ENCODE measurements at regions of chr16 and their contacts with region 1.

Region 1: DNA sequence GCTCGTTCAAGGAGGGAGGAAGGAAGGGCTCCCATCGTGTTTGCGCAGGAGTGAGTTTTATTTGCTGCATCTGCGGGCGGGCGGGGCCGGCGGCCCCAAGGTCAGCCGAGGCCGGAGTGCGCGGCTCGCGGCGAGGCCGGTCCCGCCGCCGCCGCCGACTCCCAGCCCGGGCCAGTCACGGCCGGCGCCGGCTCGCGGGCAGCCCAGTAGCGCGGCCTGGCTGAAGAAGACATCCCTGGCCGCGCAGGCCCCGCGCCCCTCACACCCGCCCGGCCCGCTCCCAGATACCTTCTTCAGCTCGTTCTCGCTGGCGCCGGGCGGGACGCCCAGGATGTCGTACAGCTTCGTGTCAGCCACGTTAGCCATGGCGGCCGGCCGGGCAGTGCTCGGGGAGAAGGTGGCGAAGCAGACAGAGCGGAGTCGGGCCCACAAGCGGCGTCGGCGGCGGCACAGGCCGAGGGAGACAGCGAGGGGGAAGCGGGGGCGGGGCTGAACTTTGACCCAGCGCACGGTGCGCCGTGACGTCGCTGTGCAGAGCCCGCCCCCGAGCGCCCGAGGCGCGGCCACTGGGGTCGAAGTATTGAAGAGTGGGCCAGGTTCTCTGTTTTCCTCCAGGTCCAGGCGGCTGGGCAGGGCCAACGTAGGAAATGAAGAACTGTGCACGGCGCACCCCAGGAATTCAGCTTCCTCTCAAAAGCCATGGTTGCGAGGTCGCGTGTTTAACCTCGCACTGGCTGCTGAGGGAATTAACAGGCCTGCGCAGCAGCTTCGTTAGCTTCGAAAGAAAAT is at the start of gene DNAJA2:
- DNase-seq: peak; percentile 92
- H3K4me3 Mint-ChIP-seq: peak within 1 kb of the TSS; percentile 93
- H3K27ac Mint-ChIP-seq: peak within 1 kb of the TSS; percentile 98
- H3K4me1 Mint-ChIP-seq: peaks cover 62% of the 10 kb centered on the region
- H3K27me3 Mint-ChIP-seq: no peaks in the 10 kb centered on the region
- total RNA-seq, gene DNAJA2: 56.9 to 59.9 TPM

Region 2: DNA sequence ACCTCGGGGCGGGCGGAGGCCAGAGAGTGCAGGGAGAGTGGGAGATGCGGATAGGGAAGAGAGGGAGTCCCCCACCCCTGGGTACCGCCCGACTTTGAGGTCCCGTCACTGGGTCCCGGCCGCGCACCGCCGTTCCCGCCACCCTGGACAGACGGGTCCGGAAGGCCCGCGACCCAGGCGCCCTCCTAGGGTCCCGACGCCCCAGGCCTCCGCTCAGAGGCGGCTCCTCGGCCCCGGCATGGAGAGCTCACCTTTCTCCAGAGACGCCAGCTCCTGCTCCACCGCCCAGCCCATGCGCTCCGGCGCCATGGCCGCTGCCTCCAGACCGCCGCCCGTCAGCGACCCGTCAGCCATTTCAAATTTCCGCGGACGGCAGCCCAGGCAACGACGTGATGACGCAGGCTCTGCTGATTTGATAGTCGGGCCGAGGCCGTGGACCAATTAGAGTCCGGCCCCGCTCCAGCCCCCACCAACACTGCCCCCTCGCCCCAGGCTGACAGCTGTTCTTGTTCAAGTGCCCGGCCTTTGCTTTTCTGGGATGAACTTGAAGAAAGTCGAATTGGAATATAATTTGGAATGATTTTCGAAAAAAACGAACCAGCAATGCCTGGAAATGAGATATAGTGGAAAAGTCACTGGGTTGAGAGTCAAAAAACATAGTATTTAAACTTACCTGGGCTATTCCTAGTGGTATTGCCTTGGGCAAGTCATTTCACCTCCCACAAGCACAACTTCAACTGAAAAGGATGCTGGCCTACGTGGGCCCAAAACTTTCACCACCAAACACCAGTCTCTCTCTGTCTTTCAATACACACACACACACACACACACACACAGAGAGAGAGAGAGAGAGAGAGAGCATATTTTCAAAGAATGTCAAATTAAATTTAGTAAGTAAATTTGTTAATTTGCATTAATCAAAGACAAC is 352.1 kb before region 1 on chr16 and contains the start of gene SHCBP1:
- CTCF ChIA-PET with region 1: no interaction called
- intact Hi-C with region 1: loop called (anchors 5 kb)
- DNase-seq: peak; percentile 91
- H3K4me3 Mint-ChIP-seq: peak within 1 kb of the TSS; percentile 94
- H3K27ac Mint-ChIP-seq: peak within 1 kb of the TSS; percentile 70
- H3K4me1 Mint-ChIP-seq: peaks cover 14% of the 10 kb centered on the region
- H3K27me3 Mint-ChIP-seq: peaks cover 10% of the 10 kb centered on the region
- total RNA-seq, gene SHCBP1: 41.8 to 45.0 TPM

Region 3: GRCh38 chr16:46830902-46831647 is 142.3 kb before region 1 on chr16 and contains the start of gene C16orf87:
- CTCF ChIA-PET with region 1: no interaction called
- intact Hi-C with region 1: loop called (anchors 1 kb)
- DNase-seq: peak; percentile 91
- H3K4me3 Mint-ChIP-seq: peak within 1 kb of the TSS; percentile 97
- H3K27ac Mint-ChIP-seq: peak within 1 kb of the TSS; percentile 96
- H3K4me1 Mint-ChIP-seq: peaks cover 31% of the 10 kb centered on the region
- H3K27me3 Mint-ChIP-seq: no peaks in the 10 kb centered on the region
- total RNA-seq, gene C16orf87: 13.4 to 13.5 TPM

Region 4: DNA sequence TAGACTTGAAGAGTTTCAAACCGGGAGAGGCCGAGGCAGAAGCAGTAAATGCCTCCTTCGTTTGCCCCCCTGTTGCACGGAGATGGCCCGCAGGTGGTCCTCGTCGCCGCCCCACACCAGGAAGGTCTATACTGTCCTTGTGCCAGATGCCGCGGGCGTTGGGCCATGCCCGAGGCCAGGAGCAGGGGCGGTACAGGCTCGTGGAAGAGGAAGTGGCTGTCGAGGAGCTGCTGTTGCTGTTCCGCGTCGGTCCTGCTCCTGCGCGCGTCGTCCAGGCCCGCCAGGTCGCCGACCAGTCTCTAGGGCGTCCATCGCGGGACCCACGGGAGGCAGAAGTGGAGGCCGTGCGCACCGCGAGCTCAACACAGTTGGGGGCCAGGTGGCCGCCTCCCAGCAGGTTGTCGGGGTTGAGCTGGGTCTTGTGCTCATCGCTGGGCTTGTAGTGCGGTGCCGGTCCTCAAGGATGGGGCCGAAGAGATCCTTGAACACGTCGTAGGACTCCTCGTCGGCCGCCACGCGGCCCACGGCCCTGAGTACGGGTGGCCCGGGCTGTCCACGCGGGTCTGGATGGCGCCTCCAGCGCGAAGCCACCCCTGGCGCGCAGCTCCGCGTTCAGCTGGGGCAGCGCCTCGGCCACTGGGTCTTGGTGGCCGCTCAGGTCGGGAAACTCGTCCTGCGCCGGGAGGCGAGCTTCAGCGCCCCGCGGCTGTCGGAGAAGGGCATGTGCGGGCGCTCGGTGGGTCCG is 129.3 kb before region 1 on chr16:
- CTCF ChIA-PET with region 1: no interaction called
- intact Hi-C with region 1: no loop called
- DNase-seq: no peak
- H3K4me3 Mint-ChIP-seq: no peak overlapping the region
- H3K27ac Mint-ChIP-seq: no peak overlapping the region
- H3K4me1 Mint-ChIP-seq: no peaks in the 10 kb centered on the region
- H3K27me3 Mint-ChIP-seq: peaks cover 5% of the 10 kb centered on the region

Region 5: DNA sequence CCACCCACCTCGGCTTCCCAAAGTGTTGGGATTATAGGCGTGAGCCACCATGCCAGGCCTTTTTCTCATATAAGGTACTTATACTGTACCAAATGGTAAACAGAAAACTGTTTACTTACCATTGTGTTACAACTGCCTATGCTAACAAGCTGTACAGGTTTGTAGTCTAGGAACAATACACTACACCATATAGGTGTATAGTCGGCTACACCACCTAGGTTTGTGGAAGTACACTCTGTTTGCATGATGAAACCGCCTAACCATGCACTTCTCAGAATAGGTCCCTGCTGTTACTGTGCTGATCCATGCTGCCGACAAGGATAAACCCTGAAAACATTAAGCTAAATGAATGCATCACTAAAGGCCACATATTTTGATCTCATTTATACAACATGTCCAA is 18.8 kb before region 1 on chr16:
- CTCF ChIA-PET with region 1: no interaction called
- intact Hi-C with region 1: loop called (anchors 2 kb)
- DNase-seq: no peak
- H3K4me3 Mint-ChIP-seq: no peak overlapping the region
- H3K27ac Mint-ChIP-seq: no peak overlapping the region
- H3K4me1 Mint-ChIP-seq: peaks cover 15% of the 10 kb centered on the region
- H3K27me3 Mint-ChIP-seq: no peaks in the 10 kb centered on the region

Region 6: DNA sequence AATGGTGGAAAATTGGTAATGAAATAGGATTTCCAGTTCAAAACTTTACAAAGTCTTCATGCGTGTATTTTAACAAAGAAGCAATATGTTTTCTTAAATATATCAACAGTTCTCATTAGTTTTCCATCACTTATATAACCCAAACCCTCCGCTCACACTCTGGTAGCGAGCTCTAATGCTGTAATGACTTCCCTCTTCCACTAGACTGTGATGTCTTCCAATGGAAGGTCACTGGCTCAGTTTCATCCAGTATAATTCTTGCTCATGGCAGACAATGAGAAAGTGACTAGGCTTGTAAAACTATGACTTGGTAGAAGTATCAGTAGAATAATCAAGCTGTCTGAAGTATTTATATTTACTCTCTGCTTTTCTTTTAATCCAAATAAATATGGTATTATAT is 137.5 kb after region 1 on chr16:
- CTCF ChIA-PET with region 1: interaction called, 3 read pairs
- intact Hi-C with region 1: loop called (anchors 1 kb)
- DNase-seq: no peak
- H3K4me3 Mint-ChIP-seq: no peak overlapping the region
- H3K27ac Mint-ChIP-seq: no peak overlapping the region
- H3K4me1 Mint-ChIP-seq: peaks cover 19% of the 10 kb centered on the region
- H3K27me3 Mint-ChIP-seq: no peaks in the 10 kb centered on the region

Region 7: DNA sequence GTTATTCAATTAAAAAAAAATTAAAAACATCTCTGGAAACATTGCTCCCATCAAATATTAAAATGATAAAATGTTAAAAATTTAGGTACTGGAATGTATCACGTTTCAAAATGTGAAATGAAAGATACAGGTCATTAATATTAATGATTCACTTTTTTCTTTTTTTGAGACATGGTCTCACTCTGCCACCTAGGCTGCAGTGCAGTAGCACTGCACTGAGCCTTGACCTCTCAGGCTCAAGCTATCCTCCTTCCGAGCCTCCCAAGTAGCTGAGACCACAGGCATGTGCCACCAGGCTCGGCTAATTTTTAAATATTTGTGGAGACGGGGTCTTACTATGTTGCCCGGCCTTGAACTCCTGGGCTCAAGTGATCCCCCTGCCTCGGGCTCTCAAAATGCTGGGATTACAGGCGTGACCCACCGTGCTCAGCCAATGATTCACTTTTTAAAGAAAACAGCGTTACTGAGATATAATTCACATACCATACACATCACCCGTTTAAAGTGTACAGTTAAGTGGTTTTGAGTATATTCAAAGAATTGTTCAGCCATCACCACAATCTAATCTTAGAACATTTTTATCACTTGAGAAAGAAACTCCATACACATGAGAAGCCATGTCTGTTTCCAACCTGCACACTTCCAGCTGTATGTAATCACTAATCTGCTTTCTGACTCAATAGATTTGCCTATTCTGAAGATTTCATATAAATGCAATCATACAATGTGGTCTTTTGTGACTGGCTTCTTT is 189.4 kb after region 1 on chr16:
- CTCF ChIA-PET with region 1: no interaction called
- intact Hi-C with region 1: no loop called
- DNase-seq: no peak
- H3K4me3 Mint-ChIP-seq: no peak overlapping the region
- H3K27ac Mint-ChIP-seq: no peak overlapping the region
- H3K4me1 Mint-ChIP-seq: no peaks in the 10 kb centered on the region
- H3K27me3 Mint-ChIP-seq: no peaks in the 10 kb centered on the region

Region 8: DNA sequence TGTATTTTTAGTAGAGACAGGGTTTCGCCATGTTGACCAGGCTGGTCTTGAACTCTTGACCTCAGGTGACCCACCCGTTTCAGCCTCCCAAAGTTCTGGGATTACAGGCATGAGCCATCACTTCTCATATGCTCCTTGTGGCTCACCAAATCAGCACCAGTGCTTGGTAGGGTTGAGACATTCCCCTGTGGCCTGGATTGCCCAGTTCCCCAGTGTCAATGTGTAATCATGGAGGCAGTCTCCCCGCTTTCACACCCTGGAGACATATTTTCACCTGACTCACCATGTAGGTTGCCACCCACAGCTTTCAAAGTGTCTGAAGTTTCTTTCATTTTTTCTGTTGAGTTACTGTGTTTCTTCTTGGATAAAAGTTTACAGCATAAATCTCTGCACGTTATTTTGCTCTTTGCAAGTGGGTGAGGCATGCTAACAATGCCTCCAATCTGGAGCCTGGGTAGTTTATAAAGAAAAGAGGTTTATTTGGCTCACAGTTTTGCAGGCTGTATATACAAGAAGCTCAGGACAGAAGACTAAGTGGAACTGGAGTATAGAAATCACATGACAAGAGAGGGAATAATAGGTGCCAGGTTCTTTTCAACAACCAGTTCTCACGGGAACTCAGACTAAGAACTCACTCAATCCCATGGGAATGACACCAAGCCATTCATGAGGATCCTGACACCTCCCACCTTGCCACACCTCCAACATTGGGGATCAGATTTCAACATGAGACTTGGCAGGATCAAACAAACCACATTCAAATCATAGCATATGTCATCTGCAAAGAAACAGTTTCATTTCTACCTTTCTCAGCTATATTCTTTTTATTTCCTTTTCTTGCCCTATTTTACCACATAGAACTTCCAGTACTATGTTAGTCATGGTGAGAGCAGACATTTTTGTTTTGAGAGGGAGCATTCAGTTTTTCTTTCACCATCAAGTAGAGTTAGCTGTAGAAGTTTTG is 601.0 kb after region 1 on chr16:
- CTCF ChIA-PET with region 1: no interaction called
- intact Hi-C with region 1: loop called (anchors 1 kb)
- DNase-seq: peak; percentile 70
- H3K4me3 Mint-ChIP-seq: no peak overlapping the region
- H3K27ac Mint-ChIP-seq: peak overlapping the region; percentile 86
- H3K4me1 Mint-ChIP-seq: peaks cover 56% of the 10 kb centered on the region
- H3K27me3 Mint-ChIP-seq: no peaks in the 10 kb centered on the region

Region 9: GRCh38 chr16:48365581-48366164 is 1392.3 kb after region 1 on chr16:
- CTCF ChIA-PET with region 1: no interaction called
- intact Hi-C with region 1: loop called (anchors 5 kb)
- DNase-seq: peak; percentile 88
- H3K4me3 Mint-ChIP-seq: peak overlapping the region; percentile 99
- H3K27ac Mint-ChIP-seq: peak overlapping the region; percentile 100
- H3K4me1 Mint-ChIP-seq: peaks cover 65% of the 10 kb centered on the region
- H3K27me3 Mint-ChIP-seq: no peaks in the 10 kb centered on the region

Measured in activated naive CD4-positive, alpha-beta T cell treated with anti-CD3 and anti-CD28 coated beads for 36 hours (primary cell).